Transverse colon (tissue), 4 donors: ENCODE measurements at regions of chr14 and their contacts with region 1.

Region 1: GRCh38 chr14:27164139-27164538 is 566.3 kb upstream of the NOVA1 start:
- DNase-seq: no peak
- H3K4me3 ChIP-seq: no peak overlapping the region
- H3K27ac ChIP-seq: no peak overlapping the region
- H3K4me1 ChIP-seq: no peaks in the 10 kb centered on the region
- H3K27me3 ChIP-seq: no peaks in the 10 kb centered on the region
- CTCF ChIP-seq: no peak
- EP300 ChIP-seq: no peak
- POLR2A ChIP-seq: no peak

Region 2: GRCh38 chr14:27127838-27128237 is 36.3 kb before region 1 on chr14:
- in situ Hi-C with region 1: no loop called
- intact Hi-C with region 1: no loop called
- DNase-seq: no peak
- H3K4me3 ChIP-seq: no peak overlapping the region
- H3K27ac ChIP-seq: no peak overlapping the region
- H3K4me1 ChIP-seq: no peaks in the 10 kb centered on the region
- H3K27me3 ChIP-seq: no peaks in the 10 kb centered on the region
- CTCF ChIP-seq: no peak
- EP300 ChIP-seq: no peak
- POLR2A ChIP-seq: no peak

Region 3: GRCh38 chr14:27145170-27145569 is 19.0 kb before region 1 on chr14:
- in situ Hi-C with region 1: no loop called
- intact Hi-C with region 1: loop called (anchors 1 kb)
- DNase-seq: no peak
- H3K4me3 ChIP-seq: no peak overlapping the region
- H3K27ac ChIP-seq: no peak overlapping the region
- H3K4me1 ChIP-seq: no peaks in the 10 kb centered on the region
- H3K27me3 ChIP-seq: no peaks in the 10 kb centered on the region
- CTCF ChIP-seq: no peak
- EP300 ChIP-seq: no peak
- POLR2A ChIP-seq: no peak

Region 4: DNA sequence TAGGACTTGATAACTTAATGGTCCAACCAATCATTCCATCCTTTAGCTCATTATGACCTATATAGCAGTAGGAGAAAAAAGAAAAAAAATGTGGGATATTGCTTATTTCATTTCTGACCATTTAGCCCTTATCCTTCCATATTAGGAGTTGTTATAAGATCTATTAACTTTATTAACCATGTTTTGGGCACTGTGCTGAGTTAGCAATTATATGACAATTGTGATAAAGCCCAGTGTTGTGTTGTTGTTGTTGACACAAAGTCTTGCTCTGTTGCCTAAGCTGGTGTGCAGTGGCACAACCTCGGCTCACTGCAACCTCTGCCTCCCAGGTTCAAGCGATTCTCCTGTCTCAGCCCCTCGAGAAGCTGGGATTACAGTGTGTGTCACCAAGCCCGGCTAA is 1032.7 kb after region 1 on chr14:
- in situ Hi-C with region 1: no loop called
- intact Hi-C with region 1: no loop called
- DNase-seq: no peak
- H3K4me3 ChIP-seq: no peak overlapping the region
- H3K27ac ChIP-seq: no peak overlapping the region
- H3K4me1 ChIP-seq: no peaks in the 10 kb centered on the region
- H3K27me3 ChIP-seq: no peaks in the 10 kb centered on the region
- CTCF ChIP-seq: no peak
- EP300 ChIP-seq: no peak
- POLR2A ChIP-seq: no peak